Sigmoid colon (tissue), 7 donors: ENCODE measurements at regions of chr1 and their contacts with region 1.

Region 1: GRCh38 chr1:114979278-114979891 is 50.2 kb upstream of the TSHB start:
- DNase-seq: peak; percentile 75
- H3K4me3 ChIP-seq: no peak overlapping the region
- H3K27ac ChIP-seq: no peak overlapping the region
- H3K4me1 ChIP-seq: no peaks in the 10 kb centered on the region
- H3K27me3 ChIP-seq: no peaks in the 10 kb centered on the region
- CTCF ChIP-seq: peak; percentile 51 to 84 (median 76)
- EP300 ChIP-seq: no peak
- POLR2A ChIP-seq: no peak

Region 2: DNA sequence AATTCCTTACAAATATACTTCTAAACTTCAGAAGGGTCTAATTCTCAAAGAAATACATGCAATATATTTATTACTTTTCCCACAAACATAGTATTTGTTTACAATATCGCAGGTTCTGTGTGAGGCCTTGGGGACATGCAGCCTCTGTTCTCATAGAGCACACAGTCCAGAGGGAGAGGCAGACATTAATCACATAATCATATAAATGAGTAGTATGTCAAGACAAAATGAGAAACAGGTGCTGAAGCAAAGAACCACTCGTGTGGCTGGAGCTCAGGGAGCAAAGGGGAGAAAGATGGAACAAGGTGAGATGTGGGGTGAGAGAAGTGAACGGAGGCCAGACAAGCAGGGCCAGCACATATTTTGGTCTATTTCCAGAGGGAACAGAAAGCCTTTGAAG is 1615.5 kb before region 1 on chr1:
- intact Hi-C with region 1: no loop called
- DNase-seq: no peak
- H3K4me3 ChIP-seq: no peak overlapping the region
- H3K27ac ChIP-seq: no peak overlapping the region
- H3K4me1 ChIP-seq: no peaks in the 10 kb centered on the region
- H3K27me3 ChIP-seq: no peaks in the 10 kb centered on the region
- CTCF ChIP-seq: no peak
- EP300 ChIP-seq: no peak
- POLR2A ChIP-seq: no peak

Region 3: GRCh38 chr1:115036814-115037507 is 57.6 kb after region 1 on chr1:
- intact Hi-C with region 1: loop called (anchors 5 kb)
- DNase-seq: no peak
- H3K4me3 ChIP-seq: no peak overlapping the region
- H3K27ac ChIP-seq: peak overlapping the region in 1 of 4 donors; percentile 44
- H3K4me1 ChIP-seq: peaks cover 0 to 24% (median 18%) of the 10 kb centered on the region in 4 donors
- H3K27me3 ChIP-seq: no peaks in the 10 kb centered on the region
- CTCF ChIP-seq: no peak
- EP300 ChIP-seq: no peak
- POLR2A ChIP-seq: no peak

Region 4: GRCh38 chr1:115052454-115053083 is 73.2 kb after region 1 on chr1:
- intact Hi-C with region 1: loop called (anchors 2 kb)
- DNase-seq: no peak
- H3K4me3 ChIP-seq: no peak overlapping the region
- H3K27ac ChIP-seq: peak overlapping the region in 1 of 4 donors; percentile 43
- H3K4me1 ChIP-seq: peaks cover 0 to 36% (median 21%) of the 10 kb centered on the region in 4 donors
- H3K27me3 ChIP-seq: no peaks in the 10 kb centered on the region
- CTCF ChIP-seq: peak; percentile 29 to 81 (median 72)
- EP300 ChIP-seq: no peak
- POLR2A ChIP-seq: no peak

Region 5: DNA sequence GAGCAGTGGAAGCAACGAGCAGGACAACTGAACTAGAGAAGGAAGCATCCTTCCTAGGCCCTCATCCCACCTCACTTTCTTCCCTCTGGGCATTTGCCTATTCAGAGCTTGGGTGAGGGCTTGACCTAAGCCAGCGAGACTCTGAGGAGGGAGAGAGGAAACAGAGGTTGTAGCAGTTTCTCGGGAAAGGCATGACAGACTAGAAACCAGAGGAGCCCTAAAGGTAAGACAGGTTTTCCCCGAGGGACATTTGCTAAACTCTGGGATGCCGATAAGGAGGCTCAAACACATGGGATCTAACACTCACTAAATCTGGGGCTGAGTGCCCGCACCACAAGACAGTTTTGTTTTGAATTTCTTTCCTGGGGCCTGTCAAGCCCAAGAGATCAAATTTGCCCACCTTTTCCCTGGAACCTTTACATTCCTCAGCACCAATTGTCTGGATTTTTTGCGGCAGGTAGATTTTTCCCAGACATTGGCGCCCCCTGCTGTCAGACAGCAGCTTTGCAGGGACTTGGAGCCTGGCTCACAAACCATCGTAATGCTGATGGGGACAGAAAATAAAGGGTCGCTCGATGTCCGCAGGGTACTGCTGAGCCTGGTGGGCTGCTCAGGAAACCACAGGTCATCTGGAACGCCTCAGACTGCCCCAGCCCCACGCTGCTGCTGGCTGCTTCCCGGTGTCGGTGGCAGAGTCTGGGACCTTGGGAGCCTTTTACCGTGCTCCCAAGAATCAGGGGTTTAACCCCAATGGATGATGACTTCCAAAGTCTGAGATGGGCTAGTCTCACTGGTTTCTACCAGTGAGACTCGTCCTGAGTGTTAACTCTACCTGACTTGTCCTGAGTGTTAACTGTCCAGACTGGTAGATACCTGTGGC is 133.4 kb after region 1 on chr1:
- intact Hi-C with region 1: loop called (anchors 1 kb)
- DNase-seq: no peak
- H3K4me3 ChIP-seq: no peak overlapping the region
- H3K27ac ChIP-seq: no peak overlapping the region
- H3K4me1 ChIP-seq: peaks cover 0 to 10% (median 3%) of the 10 kb centered on the region in 4 donors
- H3K27me3 ChIP-seq: no peaks in the 10 kb centered on the region
- CTCF ChIP-seq: peak; percentile 74 to 94 (median 92)
- EP300 ChIP-seq: no peak
- POLR2A ChIP-seq: no peak

Region 6: GRCh38 chr1:115469703-115470476 is 490.5 kb after region 1 on chr1:
- intact Hi-C with region 1: no loop called
- DNase-seq: no peak
- H3K4me3 ChIP-seq: no peak overlapping the region
- H3K27ac ChIP-seq: no peak overlapping the region
- H3K4me1 ChIP-seq: peaks cover 0 to 7% (median 0%) of the 10 kb centered on the region in 4 donors
- H3K27me3 ChIP-seq: no peaks in the 10 kb centered on the region
- CTCF ChIP-seq: peak; percentile 47 to 87 (median 78)
- EP300 ChIP-seq: no peak
- POLR2A ChIP-seq: no peak

Region 7: DNA sequence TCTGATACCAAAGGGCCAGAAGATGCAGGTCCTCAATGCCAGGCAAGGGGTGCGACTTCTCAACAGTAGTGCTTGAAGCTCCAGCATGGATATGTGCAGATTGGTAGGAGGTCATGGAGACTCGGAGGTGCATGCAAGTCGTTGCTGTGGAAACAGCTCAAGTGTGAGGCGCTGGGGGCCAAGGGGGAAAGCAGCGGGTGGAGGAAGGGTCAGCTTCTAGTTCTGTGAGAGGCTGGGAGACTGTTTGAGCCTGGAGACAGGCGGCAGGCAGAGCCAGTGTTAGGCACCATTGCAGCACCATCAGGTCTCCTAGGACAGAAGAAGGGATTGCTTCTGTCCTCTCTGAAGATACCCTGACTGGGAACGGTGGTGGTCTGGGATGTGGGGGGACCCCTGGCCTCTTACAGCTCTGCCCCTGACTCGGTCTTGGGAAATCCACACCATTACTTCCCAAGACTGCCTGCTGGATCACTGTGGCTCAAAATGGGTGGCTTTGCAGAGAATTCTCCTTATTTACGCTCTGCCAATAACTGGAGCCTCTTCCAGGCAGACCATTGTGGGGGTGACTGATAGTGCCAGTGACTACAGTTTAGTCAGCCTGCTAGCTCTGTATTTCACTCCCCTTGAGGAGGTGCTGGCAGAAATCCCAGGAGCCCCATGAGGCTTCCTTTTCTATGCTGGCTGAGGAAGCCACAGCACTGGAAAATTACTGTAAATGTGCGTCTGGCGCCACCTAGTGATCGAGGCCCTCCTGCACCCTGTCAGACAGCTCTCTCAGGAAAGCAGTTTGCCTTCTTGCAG is 616.1 kb after region 1 on chr1:
- intact Hi-C with region 1: loop called (anchors 5 kb)
- DNase-seq: peak; percentile 91
- H3K4me3 ChIP-seq: no peak overlapping the region
- H3K27ac ChIP-seq: no peak overlapping the region
- H3K4me1 ChIP-seq: peaks cover 0 to 5% (median 4%) of the 10 kb centered on the region in 4 donors
- H3K27me3 ChIP-seq: no peaks in the 10 kb centered on the region
- CTCF ChIP-seq: peak; percentile 69 to 91 (median 82)
- EP300 ChIP-seq: no peak
- POLR2A ChIP-seq: no peak